ENCODE measurements at regions of chr17 and their contacts with region 1.

Region 1: GRCh38 chr17:60325730-60326524 is 66.0 kb downstream of the USP32 start:
- DNase-seq: no peak
- ATAC-seq: no peak
- H3K4me3 ChIP-seq: no peak overlapping the region
- H3K4me3 Mint-ChIP-seq: no peak overlapping the region
- H3K27ac ChIP-seq: no peak overlapping the region
- H3K27ac Mint-ChIP-seq: no peak overlapping the region
- H3K4me1 ChIP-seq: no peaks in the 10 kb centered on the region
- H3K4me1 Mint-ChIP-seq: peaks cover 13 to 22% (median 21%) of the 10 kb centered on the region in 3 donors
- H3K27me3 ChIP-seq: no peaks in the 10 kb centered on the region
- H3K27me3 Mint-ChIP-seq: no peaks in the 10 kb centered on the region

Region 2: DNA sequence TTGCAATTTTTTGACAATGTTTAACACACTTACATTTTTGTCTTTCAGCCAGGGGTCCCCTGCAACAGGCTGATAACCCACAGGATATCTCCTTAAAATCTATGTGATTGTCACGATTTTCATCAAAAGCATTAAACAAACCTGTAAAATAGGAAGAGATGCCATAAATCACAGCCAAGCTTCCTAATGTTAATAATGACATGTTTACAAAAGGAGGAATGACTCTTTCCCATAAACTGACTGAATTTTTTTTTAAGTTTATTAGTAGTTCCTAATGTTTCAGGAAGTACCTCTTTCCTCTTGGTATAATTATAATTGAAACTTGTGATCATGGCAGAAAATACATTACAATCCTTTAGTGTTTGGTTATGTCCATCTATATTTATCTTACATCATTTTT is 56.5 kb before region 1 on chr17:
- CTCF ChIA-PET with region 1: no interaction called
- POLR2A ChIA-PET with region 1: interaction called in 1 of 2 experiments, 15 read pairs
- DNase-seq: no peak
- ATAC-seq: no peak
- H3K4me3 ChIP-seq: no peak overlapping the region
- H3K4me3 Mint-ChIP-seq: no peak overlapping the region
- H3K27ac ChIP-seq: no peak overlapping the region
- H3K27ac Mint-ChIP-seq: no peak overlapping the region
- H3K4me1 ChIP-seq: no peaks in the 10 kb centered on the region
- H3K4me1 Mint-ChIP-seq: no peaks in the 10 kb centered on the region
- H3K27me3 ChIP-seq: no peaks in the 10 kb centered on the region
- H3K27me3 Mint-ChIP-seq: no peaks in the 10 kb centered on the region

Region 3: GRCh38 chr17:60303406-60304099 is 22.4 kb before region 1 on chr17:
- CTCF ChIA-PET with region 1: no interaction called
- POLR2A ChIA-PET with region 1: no interaction called
- DNase-seq: no peak
- ATAC-seq: no peak
- H3K4me3 ChIP-seq: no peak overlapping the region
- H3K4me3 Mint-ChIP-seq: no peak overlapping the region
- H3K27ac ChIP-seq: no peak overlapping the region
- H3K27ac Mint-ChIP-seq: no peak overlapping the region
- H3K4me1 ChIP-seq: peaks cover 0 to 4% of the 10 kb centered on the region in 2 experiments
- H3K4me1 Mint-ChIP-seq: peaks cover 34 to 38% (median 35%) of the 10 kb centered on the region in 3 donors
- H3K27me3 ChIP-seq: no peaks in the 10 kb centered on the region
- H3K27me3 Mint-ChIP-seq: no peaks in the 10 kb centered on the region